ENCODE measurements at regions of chr7 and their contacts with region 1.

Region 1: DNA sequence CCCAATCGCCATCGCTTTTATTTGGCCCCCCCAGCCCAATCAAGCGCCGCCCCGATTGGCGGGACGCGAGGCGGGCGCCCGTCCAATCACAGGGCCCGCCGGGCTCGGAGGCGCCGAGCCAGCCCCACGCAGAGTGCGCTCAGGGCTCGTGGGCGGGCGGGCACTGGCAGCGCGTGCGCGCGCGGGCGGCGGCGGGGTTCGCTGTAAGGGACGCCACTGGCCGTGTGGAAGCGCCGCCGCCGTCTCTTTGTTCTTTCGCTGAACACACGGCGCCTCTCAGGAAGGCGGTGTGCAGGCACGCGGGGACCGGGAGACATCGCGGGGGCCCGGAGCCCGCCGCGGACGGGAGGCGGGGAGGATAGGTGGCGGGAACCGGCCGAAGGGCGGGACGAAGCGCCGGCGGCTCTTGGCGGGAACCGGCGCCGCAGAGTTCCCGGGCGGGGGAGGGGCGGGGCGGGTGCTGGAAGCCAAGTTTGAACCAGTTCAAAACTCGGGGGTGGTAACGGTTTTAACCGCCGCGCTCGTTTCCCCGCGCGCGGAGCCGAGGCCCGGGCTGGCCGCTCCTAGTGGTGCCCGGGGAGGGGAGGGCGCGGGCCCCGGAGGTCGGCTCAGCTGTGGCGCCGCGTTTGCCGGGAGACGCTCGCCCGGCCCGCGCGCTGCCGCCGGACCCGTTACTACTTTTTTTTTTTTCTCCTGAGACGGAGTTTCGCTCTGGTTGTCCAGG is 370 bp upstream of the EZH2 start:
- DNase-seq: peak; percentile 85 to 97 (median 90)
- H3K4me3 ChIP-seq: peak overlapping the region; percentile 59 to 95 (median 86)
- H3K27ac ChIP-seq: peak overlapping the region; percentile 31 to 96 (median 87)
- H3K27me3 ChIP-seq: no peaks in the 10 kb centered on the region
- CTCF ChIP-seq: peak in 17 of 56 donors; percentile 2 to 47 (median 24)

Region 2: DNA sequence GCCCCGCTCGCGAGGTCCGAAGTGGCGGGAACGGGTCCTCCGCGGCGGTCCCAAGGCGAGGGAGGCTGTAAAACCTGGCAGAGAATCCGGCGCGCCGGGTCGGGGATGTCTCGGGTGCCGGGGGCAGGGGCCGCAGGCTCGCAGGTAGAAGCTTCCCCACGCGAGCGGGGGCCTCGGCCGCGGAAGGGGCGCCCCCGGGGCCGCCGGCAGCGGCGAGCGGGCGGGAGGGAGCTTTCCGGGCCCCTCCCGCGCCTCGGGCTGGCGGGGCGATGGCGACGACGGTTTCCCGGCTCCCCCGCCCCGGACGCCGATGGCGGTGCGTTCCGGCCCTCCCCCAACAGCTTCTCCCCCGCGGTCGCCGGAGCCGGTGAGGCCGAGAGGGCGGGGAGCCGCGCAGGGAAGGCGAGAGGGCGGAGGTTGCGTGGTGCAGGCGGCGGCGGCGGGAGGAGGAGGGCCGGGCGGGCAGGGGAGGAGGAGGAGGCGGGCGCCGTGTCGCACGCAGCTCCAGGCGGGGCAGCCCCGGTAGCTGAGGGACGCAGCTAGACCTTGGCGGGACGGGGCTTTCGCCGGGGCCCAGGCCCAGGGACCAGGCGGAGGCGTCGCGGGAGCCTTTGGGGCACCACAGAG is 186.0 kb before region 1 on chr7 and contains the start of gene CUL1:
- intact Hi-C with region 1: loop called (anchors 1 to 5 kb)
- DNase-seq: peak; percentile 40 to 85 (median 64)
- H3K4me3 ChIP-seq: peak within 1 kb of the TSS; percentile 68 to 98 (median 90)
- H3K27ac ChIP-seq: peak within 1 kb of the TSS; percentile 61 to 99 (median 94)
- H3K27me3 ChIP-seq: no peaks in the 10 kb centered on the region
- CTCF ChIP-seq: peak in 2 of 56 donors; percentile 2 to 28
- total RNA-seq, gene CUL1: 36.5 to 74.2 (median 59.6) TPM

Region 3: GRCh38 chr7:148940702-148941597 is 56.5 kb after region 1 on chr7:
- intact Hi-C with region 1: loop called (anchors 2 kb)
- DNase-seq: peak; percentile 54 to 75 (median 70)
- H3K4me3 ChIP-seq: peak overlapping the region; percentile 56 to 96 (median 81)
- H3K27ac ChIP-seq: peak overlapping the region in 58 of 59 donors; percentile 8 to 94 (median 74)
- H3K27me3 ChIP-seq: no peaks in the 10 kb centered on the region
- CTCF ChIP-seq: peak in 20 of 56 donors; percentile 4 to 38 (median 17)

Region 4: GRCh38 chr7:148987010-148987750 is 102.7 kb after region 1 on chr7:
- intact Hi-C with region 1: loop called in 1 of 2 experiments (anchors 5 kb)
- DNase-seq: peak; percentile 50 to 92 (median 82)
- H3K4me3 ChIP-seq: peak overlapping the region; percentile 41 to 95 (median 76)
- H3K27ac ChIP-seq: peak overlapping the region; percentile 26 to 95 (median 87)
- H3K27me3 ChIP-seq: no peaks in the 10 kb centered on the region
- CTCF ChIP-seq: peak in 6 of 56 donors; percentile 5 to 17 (median 9)

Region 5: GRCh38 chr7:149081914-149082313 is 197.5 kb after region 1 on chr7:
- intact Hi-C with region 1: loop called in 1 of 2 experiments (anchors 10 kb)
- DNase-seq: no peak
- H3K4me3 ChIP-seq: no peak overlapping the region
- H3K27ac ChIP-seq: no peak overlapping the region
- H3K27me3 ChIP-seq: no peaks in the 10 kb centered on the region
- CTCF ChIP-seq: no peak

Measured in dorsolateral prefrontal cortex (tissue), 120 donors.